ENCODE measurements at regions of chr19 and their contacts with region 1.

Region 1: DNA sequence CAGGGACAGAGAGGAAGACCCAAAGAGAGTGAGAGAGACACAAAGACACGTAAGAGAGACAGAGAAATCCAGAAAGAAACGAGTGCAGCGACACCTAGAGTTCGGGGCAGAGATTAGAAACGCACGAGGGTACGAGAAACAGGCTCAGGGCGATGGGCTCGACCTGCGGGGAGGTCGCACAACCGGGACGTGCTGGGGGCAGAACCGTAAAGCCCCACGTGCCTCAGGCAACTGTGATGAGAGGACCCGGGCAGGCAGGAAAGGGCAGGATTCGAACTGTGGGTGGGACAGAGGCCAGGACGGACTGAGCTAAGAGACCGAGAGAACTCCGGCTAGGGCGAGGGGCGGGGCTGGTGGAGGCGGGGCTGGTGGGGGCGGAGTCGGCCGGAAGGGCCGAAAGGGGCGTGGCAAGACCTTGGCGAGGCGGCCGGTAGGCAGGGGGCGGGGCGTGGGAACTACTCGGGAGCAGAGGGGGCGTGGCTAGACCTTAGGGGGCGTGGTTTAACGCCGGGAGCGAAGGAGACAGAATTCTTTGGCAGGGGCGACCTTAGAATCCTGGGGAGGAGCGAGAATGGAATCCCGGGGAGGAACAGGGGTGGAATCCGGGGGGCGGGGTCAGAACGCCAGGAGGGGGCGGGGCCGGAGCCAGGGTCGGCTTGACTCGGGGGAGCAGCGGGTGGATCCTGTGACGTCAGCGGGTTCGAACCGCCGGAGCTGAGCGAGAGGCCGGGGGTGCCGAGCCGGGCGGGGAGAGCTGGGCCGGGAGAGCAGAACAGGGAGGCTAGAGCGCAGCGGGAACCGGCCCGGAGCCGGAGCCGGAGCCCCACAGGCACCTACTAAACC is at the start of gene NECTIN2:
- DNase-seq: peak; percentile 99
- H3K4me3 ChIP-seq: peak within 1 kb of the TSS; percentile 69 to 96 (median 83)
- H3K27ac ChIP-seq: peak within 1 kb of the TSS; percentile 99
- H3K4me1 ChIP-seq: peaks cover 35% of the 10 kb centered on the region
- H3K27me3 ChIP-seq: no peaks in the 10 kb centered on the region
- CTCF ChIP-seq: peak; percentile 83 to 85
- POLR2A ChIP-seq: peak; percentile 76
- total RNA-seq, gene NECTIN2: 205 and 211 TPM in 2 replicates

Region 2: GRCh38 chr19:44587963-44588770 is 257.7 kb before region 1 on chr19:
- CTCF ChIA-PET with region 1: no interaction called
- POLR2A ChIA-PET with region 1: no interaction called
- dilution Hi-C with region 1: no loop called
- intact Hi-C with region 1: loop called (anchors 5 kb)
- DNase-seq: peak; percentile 77
- H3K4me3 ChIP-seq: peak overlapping the region in 1 of 3 experiments; percentile 1
- H3K27ac ChIP-seq: peak overlapping the region; percentile 93
- H3K4me1 ChIP-seq: peaks cover 55% of the 10 kb centered on the region
- H3K27me3 ChIP-seq: no peaks in the 10 kb centered on the region
- CTCF ChIP-seq: peak in 1 of 2 donors; percentile 12
- POLR2A ChIP-seq: no peak

Region 3: GRCh38 chr19:44723952-44724319 is 121.9 kb before region 1 on chr19:
- CTCF ChIA-PET with region 1: interaction called, 32 read pairs
- POLR2A ChIA-PET with region 1: no interaction called
- dilution Hi-C with region 1: no loop called
- intact Hi-C with region 1: loop called (anchors 1 kb)
- DNase-seq: peak; percentile 81
- H3K4me3 ChIP-seq: no peak overlapping the region
- H3K27ac ChIP-seq: no peak overlapping the region
- H3K4me1 ChIP-seq: peaks cover 36% of the 10 kb centered on the region
- H3K27me3 ChIP-seq: no peaks in the 10 kb centered on the region
- CTCF ChIP-seq: peak; percentile 90 to 98
- POLR2A ChIP-seq: no peak

Region 4: DNA sequence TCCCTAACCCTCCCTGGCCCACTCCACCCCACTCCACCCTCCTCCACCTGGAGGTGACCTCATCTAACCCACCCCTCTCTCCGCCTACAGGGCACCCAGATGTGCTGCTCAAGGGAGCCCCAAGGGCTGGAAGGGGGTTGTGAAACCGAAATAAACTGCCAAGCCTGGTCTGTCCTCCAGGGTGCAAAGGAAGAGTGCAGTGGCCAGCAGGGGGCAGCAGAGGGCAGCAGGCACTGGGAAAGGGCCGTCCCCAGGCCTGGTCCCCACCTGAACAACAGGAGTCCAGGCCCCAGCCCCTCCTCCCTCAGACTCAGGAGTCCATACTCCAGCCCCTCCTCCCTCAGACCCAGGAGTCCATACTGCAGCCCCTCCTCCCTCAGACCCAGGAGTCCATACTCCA is 45.4 kb before region 1 on chr19:
- CTCF ChIA-PET with region 1: interaction called, 15 read pairs
- POLR2A ChIA-PET with region 1: no interaction called
- dilution Hi-C with region 1: no loop called
- intact Hi-C with region 1: loop called (anchors 1 kb)
- DNase-seq: peak; percentile 68
- H3K4me3 ChIP-seq: no peak overlapping the region
- H3K27ac ChIP-seq: no peak overlapping the region
- H3K4me1 ChIP-seq: peaks cover 14% of the 10 kb centered on the region
- H3K27me3 ChIP-seq: no peaks in the 10 kb centered on the region
- CTCF ChIP-seq: peak; percentile 91 to 98
- POLR2A ChIP-seq: no peak

Region 5: DNA sequence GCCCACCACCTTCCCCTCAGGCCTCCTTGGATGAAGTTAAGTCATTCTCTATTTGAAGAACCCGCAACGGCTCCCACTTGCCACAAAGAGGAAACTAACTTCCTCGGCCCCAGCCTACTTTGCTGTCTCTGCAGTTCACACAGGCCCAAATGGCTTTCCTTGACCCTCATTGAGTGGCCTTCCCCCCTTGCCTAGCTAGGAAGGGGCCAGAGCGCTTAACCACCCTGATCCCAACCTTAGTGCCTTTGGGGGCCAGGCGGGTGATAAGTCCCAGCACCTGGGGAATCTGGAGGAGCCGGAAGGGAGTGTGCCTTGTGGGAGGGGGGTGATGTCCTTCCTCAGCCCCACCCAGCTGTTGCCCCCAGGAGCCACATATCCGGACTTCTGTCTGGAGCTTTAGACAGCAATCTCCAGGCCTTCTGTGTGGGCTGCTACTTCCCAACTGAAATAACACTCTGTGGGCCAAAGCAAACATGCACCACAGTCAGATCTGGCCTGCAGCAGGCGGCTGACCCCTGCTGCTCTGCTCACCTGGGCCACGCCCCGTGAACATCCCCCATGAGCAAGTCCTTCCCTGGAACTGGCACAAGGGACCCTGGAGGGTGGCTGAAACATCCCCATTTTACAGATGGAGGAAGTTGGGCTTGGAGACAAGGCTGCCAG is 10.7 kb after region 1 on chr19:
- CTCF ChIA-PET with region 1: interaction called, 5 read pairs
- POLR2A ChIA-PET with region 1: interaction called, 3 read pairs
- dilution Hi-C with region 1: no loop called
- intact Hi-C with region 1: loop called (anchors 1 kb)
- DNase-seq: peak; percentile 79
- H3K4me3 ChIP-seq: no peak overlapping the region
- H3K27ac ChIP-seq: peak overlapping the region; percentile 69
- H3K4me1 ChIP-seq: peaks cover 14% of the 10 kb centered on the region
- H3K27me3 ChIP-seq: no peaks in the 10 kb centered on the region
- CTCF ChIP-seq: no peak
- POLR2A ChIP-seq: no peak

Region 6: DNA sequence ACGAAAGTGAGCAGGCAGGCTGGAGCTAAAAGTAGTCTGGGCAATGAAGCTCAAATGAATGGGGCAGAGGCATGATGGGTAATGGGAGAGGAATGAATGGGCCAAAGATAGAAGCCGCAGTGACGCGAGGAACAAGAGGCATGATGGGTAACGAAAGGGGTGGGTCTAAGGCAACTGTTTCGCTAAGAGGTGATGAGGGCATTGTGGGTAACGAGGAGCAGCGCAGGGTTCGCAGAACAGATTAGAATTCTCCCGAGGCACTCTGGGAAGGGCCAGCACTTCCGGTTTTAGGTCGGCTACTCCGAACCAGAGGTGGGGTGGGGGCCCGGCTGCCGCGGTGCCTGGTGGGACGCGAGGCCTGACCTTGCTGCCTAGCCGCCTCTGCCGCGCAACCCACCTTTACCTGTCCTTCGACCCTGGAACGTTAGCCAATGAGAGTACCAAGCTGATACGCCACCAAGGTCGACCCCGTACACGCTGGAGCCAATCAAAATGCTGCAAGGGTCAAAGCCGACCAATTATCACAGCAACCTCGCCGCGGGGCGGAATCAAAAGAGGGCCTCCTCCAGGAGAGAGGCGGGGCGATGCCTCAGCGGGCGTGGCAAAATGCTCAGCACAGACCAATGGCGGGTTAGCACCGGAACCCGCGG is 44.7 kb after region 1 on chr19:
- CTCF ChIA-PET with region 1: interaction called, 4 read pairs
- POLR2A ChIA-PET with region 1: interaction called, 3 read pairs
- dilution Hi-C with region 1: no loop called
- intact Hi-C with region 1: loop called (anchors 1 kb)
- DNase-seq: peak; percentile 100
- H3K4me3 ChIP-seq: peak overlapping the region in 2 of 3 experiments; percentile 44 to 61
- H3K27ac ChIP-seq: peak overlapping the region; percentile 65
- H3K4me1 ChIP-seq: peaks cover 16% of the 10 kb centered on the region
- H3K27me3 ChIP-seq: no peaks in the 10 kb centered on the region
- CTCF ChIP-seq: no peak
- POLR2A ChIP-seq: peak; percentile 91

Region 7: DNA sequence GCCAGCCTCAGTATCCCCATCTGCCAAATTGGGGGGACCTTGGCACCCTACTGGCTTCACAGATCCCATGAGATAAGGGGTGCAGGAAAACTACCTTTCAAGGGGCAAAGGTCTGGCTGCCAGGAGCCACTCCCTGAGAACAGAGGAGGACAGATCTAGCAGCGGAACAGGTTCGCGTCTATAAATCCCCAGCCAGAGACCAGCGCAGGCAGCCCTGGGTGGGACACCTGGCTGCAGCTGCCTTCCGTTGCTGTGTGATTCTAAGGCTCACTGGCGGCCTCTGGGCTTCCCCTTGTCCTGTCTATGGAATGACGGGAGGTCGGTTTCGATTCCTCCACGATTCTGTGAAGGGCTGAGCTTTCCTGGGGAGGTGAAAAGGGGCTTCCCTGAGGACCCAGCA is 162.7 kb after region 1 on chr19:
- CTCF ChIA-PET with region 1: no interaction called
- POLR2A ChIA-PET with region 1: no interaction called
- dilution Hi-C with region 1: no loop called
- intact Hi-C with region 1: no loop called
- DNase-seq: no peak
- H3K4me3 ChIP-seq: no peak overlapping the region
- H3K27ac ChIP-seq: no peak overlapping the region
- H3K4me1 ChIP-seq: no peaks in the 10 kb centered on the region
- H3K27me3 ChIP-seq: no peaks in the 10 kb centered on the region
- CTCF ChIP-seq: no peak
- POLR2A ChIP-seq: no peak

Measured in endothelial cell of umbilical vein (primary cell).